ENCODE measurements at regions of chr2 and their contacts with region 1.

Region 1: DNA sequence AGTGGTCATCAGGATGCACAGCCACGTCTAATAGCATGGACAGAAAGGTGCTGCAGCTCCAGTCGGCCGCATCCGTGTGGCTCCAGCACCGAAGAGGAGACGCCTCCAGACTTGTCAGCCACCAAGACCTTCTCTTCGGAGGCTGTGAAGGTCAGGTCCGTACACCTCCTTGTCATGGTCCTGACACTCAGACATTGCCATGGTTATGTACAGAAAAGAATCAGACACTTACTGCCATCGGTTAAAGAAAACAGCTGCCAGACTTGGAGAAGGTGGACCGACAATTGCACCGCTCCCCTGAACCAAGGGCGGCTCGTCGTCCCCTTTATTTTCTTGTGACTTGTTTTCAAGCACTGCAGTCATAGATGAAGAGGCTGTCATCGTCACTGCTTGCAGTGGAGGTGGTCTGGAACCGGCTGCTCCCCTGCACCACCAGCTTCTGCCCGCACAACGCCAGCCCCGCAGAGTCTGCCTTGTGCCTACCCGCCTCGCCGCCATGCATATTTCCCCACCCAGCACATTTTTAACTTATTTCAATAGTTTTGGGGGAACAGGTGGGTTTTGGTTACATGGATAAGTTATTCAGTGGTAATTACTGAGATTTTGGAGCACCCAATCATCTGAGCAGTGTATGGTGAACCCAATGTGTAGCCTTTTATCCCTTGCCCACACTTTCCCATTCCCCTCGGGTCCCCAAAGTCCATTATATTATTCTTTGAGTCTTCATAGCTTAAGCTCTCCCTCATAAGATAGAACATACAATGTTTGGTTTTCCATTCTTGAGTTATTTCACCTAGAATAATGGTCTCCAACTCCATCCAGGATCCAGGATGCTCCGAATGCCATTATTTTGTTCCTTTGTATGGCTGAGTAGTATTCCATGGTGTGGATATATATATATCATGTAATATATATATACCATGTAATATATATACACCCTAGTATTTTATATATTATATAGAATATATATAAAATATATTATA is 18.1 kb downstream of the FBXO48 start:
- DNase-seq: peak in 1 of 2 donors; percentile 61
- ATAC-seq: peak; percentile 42 to 68 (median 50)
- H3K4me3 ChIP-seq: no peak overlapping the region
- H3K27ac ChIP-seq: no peak overlapping the region
- H3K4me1 ChIP-seq: no peaks in the 10 kb centered on the region
- H3K27me3 ChIP-seq: no peaks in the 10 kb centered on the region
- CTCF ChIP-seq: no peak

Region 2: GRCh38 chr2:68290901-68291300 is 158.1 kb before region 1 on chr2:
- intact Hi-C with region 1: loop called in 1 of 2 experiments (anchors 5 kb)
- DNase-seq: no peak
- ATAC-seq: peak; percentile 88 to 91 (median 90)
- H3K4me3 ChIP-seq: no peak overlapping the region
- H3K27ac ChIP-seq: peak overlapping the region; percentile 94
- H3K4me1 ChIP-seq: peaks cover 80% of the 10 kb centered on the region
- H3K27me3 ChIP-seq: no peaks in the 10 kb centered on the region
- CTCF ChIP-seq: no peak

Measured in psoas muscle (tissue), 8 donors.